ENCODE measurements at regions of chr12 and their contacts with region 1.

Region 1: DNA sequence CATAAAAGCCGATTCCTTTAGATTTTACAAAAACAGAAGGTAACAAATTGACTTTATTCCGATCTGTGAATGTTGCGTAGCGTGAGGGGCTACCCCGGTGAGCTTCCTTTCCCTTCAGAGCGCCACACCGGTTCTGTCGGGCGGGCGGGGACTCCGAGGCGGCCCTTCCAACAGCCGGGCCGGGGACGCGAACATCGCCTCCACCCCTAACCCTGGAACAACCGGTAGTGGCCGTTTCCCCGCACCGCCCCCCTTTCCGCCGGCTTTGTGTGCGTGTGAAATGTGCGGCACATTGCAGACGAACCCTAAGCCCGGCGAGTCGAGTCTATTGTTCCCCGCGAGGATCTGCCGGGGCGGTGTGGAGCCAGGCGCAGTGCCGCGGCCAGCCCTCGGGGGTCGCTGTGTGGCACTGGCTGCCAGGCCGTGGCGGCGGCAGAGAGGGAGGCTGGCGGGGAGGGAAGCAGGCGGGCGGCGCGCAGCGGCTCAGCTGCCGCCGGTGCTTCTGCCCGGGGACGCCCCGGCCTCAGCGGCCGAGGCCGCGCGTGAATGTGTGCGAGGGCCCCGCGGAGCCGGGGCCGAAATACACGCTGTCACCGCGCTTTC is 775 bp upstream of the ARID2 start:
- DNase-seq: peak; percentile 96
- ATAC-seq: peak; percentile 76
- H3K4me3 ChIP-seq: peak overlapping the region; percentile 69
- H3K27ac ChIP-seq: peak overlapping the region; percentile 96
- H3K4me1 ChIP-seq: peaks cover 1% of the 10 kb centered on the region; the same call in 1 of the 2 replicates
- H3K27me3 ChIP-seq: no peaks in the 10 kb centered on the region
- CTCF ChIP-seq: peak; percentile 98
- POLR2A ChIP-seq: peak; percentile 95
- RAD21 ChIP-seq: peak; percentile 57

Region 2: DNA sequence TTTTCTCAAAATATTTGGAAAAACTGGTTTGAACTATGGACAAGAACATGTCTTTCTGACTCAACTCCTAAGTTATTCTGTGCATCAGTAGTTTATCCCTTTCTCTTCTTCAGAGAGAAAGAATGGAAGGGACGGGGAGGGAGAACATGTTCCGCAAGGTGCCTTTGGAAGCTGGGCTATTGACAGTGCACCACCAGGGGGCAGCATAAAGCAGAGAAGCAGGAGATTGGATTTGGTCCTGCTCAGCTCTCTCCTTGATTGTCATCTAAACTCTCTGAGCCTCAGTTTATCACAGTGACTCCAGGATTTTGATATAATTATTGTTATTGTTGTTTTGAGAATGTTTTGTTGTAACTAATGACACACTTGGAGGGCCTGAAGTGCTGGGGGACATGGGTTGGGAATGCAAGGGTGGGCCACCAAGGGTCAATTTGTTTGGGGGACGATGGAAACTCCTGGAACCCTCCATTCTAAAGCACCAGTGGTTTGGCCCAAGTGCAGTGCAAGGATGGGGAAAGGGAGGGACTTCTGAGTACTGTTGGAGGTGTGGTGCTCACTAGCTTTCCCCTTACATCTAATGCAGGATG is 558.2 kb before region 1 on chr12:
- CTCF ChIA-PET with region 1: no interaction called
- POLR2A ChIA-PET with region 1: no interaction called
- dilution Hi-C with region 1: no loop called
- in situ Hi-C with region 1: no loop called
- intact Hi-C with region 1: loop called (anchors 2 kb)
- DNase-seq: peak; percentile 77
- ATAC-seq: peak; percentile 87
- H3K4me3 ChIP-seq: no peak overlapping the region
- H3K27ac ChIP-seq: no peak overlapping the region
- H3K4me1 ChIP-seq: no peaks in the 10 kb centered on the region
- H3K27me3 ChIP-seq: peaks cover 2% of the 10 kb centered on the region; the same call in 1 of the 2 replicates
- CTCF ChIP-seq: peak; percentile 88
- POLR2A ChIP-seq: no peak
- RAD21 ChIP-seq: peak; percentile 92

Region 3: DNA sequence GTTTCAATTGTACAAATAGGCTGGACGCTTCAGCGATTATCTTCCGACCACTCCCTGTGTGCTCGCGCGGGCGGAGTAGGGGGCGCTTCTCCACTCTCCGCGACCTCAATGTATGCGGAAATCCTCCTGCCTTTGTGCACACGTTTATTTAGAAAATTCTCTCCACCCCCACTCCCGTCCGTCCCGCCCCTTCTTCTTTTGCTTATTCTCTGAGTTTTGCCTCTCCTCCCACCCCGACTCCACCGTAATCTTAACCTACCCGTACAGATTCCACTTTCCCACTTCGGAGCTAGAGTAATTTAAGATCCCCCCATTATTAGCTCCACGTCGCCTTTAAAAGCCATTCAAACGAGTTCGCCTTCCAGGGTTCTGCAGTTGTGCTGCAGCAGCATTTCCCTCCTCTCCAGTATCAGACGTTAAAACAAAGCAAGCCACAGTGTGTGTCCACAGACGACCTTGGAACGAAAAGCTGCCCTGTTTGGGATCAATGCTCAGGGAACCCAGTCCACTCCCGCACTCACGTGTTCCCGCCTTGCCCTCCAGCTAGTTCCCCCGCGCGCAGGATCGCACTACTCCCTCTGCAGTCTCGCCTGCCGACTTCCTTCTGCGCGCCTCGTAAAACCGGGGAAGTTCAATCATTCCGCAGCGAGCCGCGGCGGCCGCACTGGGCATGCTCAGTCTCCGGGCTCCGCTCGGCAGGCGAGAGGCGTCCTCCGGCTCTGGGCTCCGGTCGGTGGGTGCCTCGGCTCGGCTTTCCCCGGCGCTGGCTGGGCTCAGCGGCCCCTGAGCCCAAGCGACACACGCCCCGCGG is 513.1 kb before region 1 on chr12 and contains the start of gene ANO6:
- CTCF ChIA-PET with region 1: no interaction called
- POLR2A ChIA-PET with region 1: no interaction called
- dilution Hi-C with region 1: no loop called
- in situ Hi-C with region 1: no loop called
- intact Hi-C with region 1: loop called (anchors 2 kb)
- DNase-seq: peak; percentile 84
- ATAC-seq: peak; percentile 84
- H3K4me3 ChIP-seq: peak within 1 kb of the TSS; percentile 60
- H3K27ac ChIP-seq: peak within 1 kb of the TSS; percentile 77
- H3K4me1 ChIP-seq: peaks cover 4% of the 10 kb centered on the region; the same call in 1 of the 2 replicates
- H3K27me3 ChIP-seq: no peaks in the 10 kb centered on the region
- CTCF ChIP-seq: peak; percentile 42
- POLR2A ChIP-seq: peak; percentile 79
- RAD21 ChIP-seq: peak; percentile 42
- total RNA-seq, gene ANO6: 41.0 and 46.7 TPM in 2 replicates

Region 4: GRCh38 chr12:45409966-45410365 is 318.8 kb before region 1 on chr12:
- CTCF ChIA-PET with region 1: no interaction called
- POLR2A ChIA-PET with region 1: no interaction called
- dilution Hi-C with region 1: no loop called
- in situ Hi-C with region 1: no loop called
- intact Hi-C with region 1: loop called (anchors 2 kb)
- DNase-seq: peak; percentile 93
- ATAC-seq: peak; percentile 93
- H3K4me3 ChIP-seq: no peak overlapping the region
- H3K27ac ChIP-seq: 0 out of 2 replicates have a peak overlapping the region, but pooled peaks have one; percentile 3
- H3K4me1 ChIP-seq: 0 out of 2 replicates have a peak, but pooled peaks cover 7% of the 10 kb centered on the region
- H3K27me3 ChIP-seq: no peaks in the 10 kb centered on the region
- CTCF ChIP-seq: no peak
- POLR2A ChIP-seq: no peak
- RAD21 ChIP-seq: no peak

Region 5: GRCh38 chr12:45828402-45828801 is 99.7 kb after region 1 on chr12:
- CTCF ChIA-PET with region 1: no interaction called
- POLR2A ChIA-PET with region 1: no interaction called
- dilution Hi-C with region 1: no loop called
- in situ Hi-C with region 1: no loop called
- intact Hi-C with region 1: no loop called
- DNase-seq: no peak
- ATAC-seq: no peak
- H3K4me3 ChIP-seq: no peak overlapping the region
- H3K27ac ChIP-seq: no peak overlapping the region
- H3K4me1 ChIP-seq: no peaks in the 10 kb centered on the region
- H3K27me3 ChIP-seq: no peaks in the 10 kb centered on the region
- CTCF ChIP-seq: no peak
- POLR2A ChIP-seq: no peak
- RAD21 ChIP-seq: no peak

Region 6: GRCh38 chr12:45990468-45991283 is 261.9 kb after region 1 on chr12 and contains the start of gene SCAF11:
- CTCF ChIA-PET with region 1: no interaction called
- POLR2A ChIA-PET with region 1: no interaction called
- dilution Hi-C with region 1: no loop called
- in situ Hi-C with region 1: no loop called
- intact Hi-C with region 1: loop called (anchors 1 kb)
- DNase-seq: peak; percentile 100
- ATAC-seq: peak; percentile 86
- H3K4me3 ChIP-seq: peak within 1 kb of the TSS; percentile 78
- H3K27ac ChIP-seq: peak within 1 kb of the TSS; percentile 87
- H3K4me1 ChIP-seq: peaks cover 3% of the 10 kb centered on the region; the same call in 1 of the 2 replicates
- H3K27me3 ChIP-seq: no peaks in the 10 kb centered on the region
- CTCF ChIP-seq: peak; percentile 99
- POLR2A ChIP-seq: peak; percentile 86
- RAD21 ChIP-seq: peak; percentile 84
- total RNA-seq, gene SCAF11: 70.4 and 90.3 TPM in 2 replicates

Measured in IMR-90 (cell line).